Activated CD4-positive, alpha-beta T cell treated with anti-CD3 and anti-CD28 coated beads for 36 hours (primary cell): ENCODE measurements at regions of chr7 and their contacts with region 1.

Region 1: GRCh38 chr7:116862234-116862950 is at the start of gene CAPZA2:
- DNase-seq: peak; percentile 97
- ATAC-seq: peak; percentile 95
- H3K4me3 Mint-ChIP-seq: peak within 1 kb of the TSS; percentile 95
- H3K27ac Mint-ChIP-seq: peak within 1 kb of the TSS; percentile 96
- H3K4me1 Mint-ChIP-seq: peaks cover 40% of the 10 kb centered on the region
- H3K27me3 Mint-ChIP-seq: peaks cover 4% of the 10 kb centered on the region
- total RNA-seq, gene CAPZA2: 173 to 262 TPM

Region 2: DNA sequence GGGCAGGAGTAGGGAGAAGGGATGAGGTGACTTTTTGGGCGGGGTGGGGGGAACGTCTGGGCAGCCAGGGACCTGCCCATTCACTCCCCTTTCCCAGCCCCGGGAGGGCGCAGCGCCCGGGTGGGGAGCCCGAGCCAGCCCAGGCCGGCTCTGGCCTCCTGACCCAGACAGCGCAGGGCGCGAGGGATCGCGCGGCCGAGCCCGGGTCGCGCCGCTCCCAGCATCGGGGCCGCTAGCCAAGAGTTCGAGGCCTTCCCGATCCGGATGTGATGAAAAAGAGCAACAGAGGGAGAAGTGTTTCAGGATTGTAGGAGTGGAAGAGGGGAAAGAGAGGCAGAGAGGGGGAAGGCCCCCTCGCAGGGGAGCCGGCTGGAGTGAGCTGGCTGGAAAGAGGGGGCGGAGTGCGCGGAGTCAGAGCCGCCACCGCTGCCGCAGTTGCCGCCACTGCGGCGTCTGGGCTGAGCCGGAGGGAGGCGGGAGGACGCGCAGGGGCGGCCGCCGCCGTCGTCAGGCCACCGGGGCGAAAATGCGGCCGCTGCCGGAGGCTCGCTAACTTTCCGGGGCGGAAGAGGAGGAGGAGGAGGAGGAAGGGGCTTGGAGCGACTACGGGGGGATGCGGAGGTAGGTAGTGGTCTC is 1940.3 kb before region 1 on chr7 and contains the start of gene MDFIC:
- CTCF ChIA-PET with region 1: no interaction called
- POLR2A ChIA-PET with region 1: no interaction called
- intact Hi-C with region 1: loop called in 1 of 2 experiments (anchors 10 kb)
- DNase-seq: peak; percentile 83
- ATAC-seq: peak; percentile 62
- H3K4me3 Mint-ChIP-seq: peak within 1 kb of the TSS; percentile 89
- H3K27ac Mint-ChIP-seq: peak within 1 kb of the TSS; percentile 96
- H3K4me1 Mint-ChIP-seq: peaks cover 63% of the 10 kb centered on the region
- H3K27me3 Mint-ChIP-seq: no peaks in the 10 kb centered on the region
- total RNA-seq, gene MDFIC: 68.4 to 113 TPM

Region 3: GRCh38 chr7:116802746-116803152 is 59.6 kb before region 1 on chr7:
- CTCF ChIA-PET with region 1: no interaction called
- POLR2A ChIA-PET with region 1: no interaction called
- intact Hi-C with region 1: no loop called
- DNase-seq: peak; percentile 59
- ATAC-seq: peak; percentile 92
- H3K4me3 Mint-ChIP-seq: no peak overlapping the region
- H3K27ac Mint-ChIP-seq: no peak overlapping the region
- H3K4me1 Mint-ChIP-seq: peaks cover 16% of the 10 kb centered on the region
- H3K27me3 Mint-ChIP-seq: peaks cover 5% of the 10 kb centered on the region

Region 4: GRCh38 chr7:116911801-116912200 is 49.4 kb after region 1 on chr7:
- CTCF ChIA-PET with region 1: interaction called, 3 read pairs
- POLR2A ChIA-PET with region 1: no interaction called
- intact Hi-C with region 1: loop called in 1 of 2 experiments (anchors 10 kb)
- DNase-seq: no peak
- ATAC-seq: no peak
- H3K4me3 Mint-ChIP-seq: no peak overlapping the region
- H3K27ac Mint-ChIP-seq: peak overlapping the region; percentile 39
- H3K4me1 Mint-ChIP-seq: no peaks in the 10 kb centered on the region
- H3K27me3 Mint-ChIP-seq: no peaks in the 10 kb centered on the region

Region 5: GRCh38 chr7:117008883-117009531 is 146.6 kb after region 1 on chr7:
- CTCF ChIA-PET with region 1: no interaction called
- POLR2A ChIA-PET with region 1: interaction called, 11 read pairs
- intact Hi-C with region 1: loop called in 1 of 2 experiments (anchors 1 kb)
- DNase-seq: peak; percentile 45
- ATAC-seq: peak; percentile 14
- H3K4me3 Mint-ChIP-seq: no peak overlapping the region
- H3K27ac Mint-ChIP-seq: no peak overlapping the region
- H3K4me1 Mint-ChIP-seq: peaks cover 67% of the 10 kb centered on the region
- H3K27me3 Mint-ChIP-seq: peaks cover 1% of the 10 kb centered on the region

Region 6: DNA sequence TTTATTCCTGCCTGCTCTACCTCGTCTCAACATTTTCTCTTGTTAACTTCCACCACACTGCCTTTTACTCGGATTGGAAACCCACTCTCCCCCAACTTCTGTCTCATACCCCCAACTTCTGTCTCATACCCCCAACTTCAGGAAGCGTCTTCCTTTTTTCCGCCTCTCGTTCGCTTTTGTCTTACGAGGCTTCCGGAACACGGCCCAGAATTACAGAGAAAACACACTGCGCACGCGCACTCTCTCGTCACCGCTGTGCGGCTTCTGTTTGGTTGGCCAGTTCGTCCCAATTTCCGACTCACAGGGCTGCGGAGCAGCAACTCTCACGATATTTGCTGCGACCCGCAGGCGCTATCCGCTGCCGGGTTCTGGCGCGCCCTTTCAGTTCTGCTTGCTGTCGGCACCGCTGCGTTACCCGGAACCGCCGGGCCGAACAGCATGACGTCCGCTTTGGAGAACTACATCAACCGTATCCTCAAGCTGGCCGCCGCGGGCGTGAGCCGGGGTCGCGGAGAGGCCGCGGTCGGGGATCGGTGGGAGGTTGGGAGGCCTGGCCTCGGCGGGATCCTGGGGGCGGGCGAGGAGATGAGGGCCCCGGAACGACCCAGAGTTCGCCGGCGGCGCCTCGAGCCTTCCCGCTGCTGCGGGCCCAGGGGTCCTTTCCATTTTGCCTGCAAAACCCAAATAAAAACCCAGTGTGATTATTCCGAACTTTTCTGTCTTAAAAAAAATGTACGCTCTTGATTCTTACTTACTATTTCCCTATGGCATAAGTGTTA is 1321.6 kb after region 1 on chr7 and contains the start of gene LSM8:
- CTCF ChIA-PET with region 1: no interaction called
- POLR2A ChIA-PET with region 1: no interaction called
- intact Hi-C with region 1: loop called in 1 of 2 experiments (anchors 5 kb)
- DNase-seq: peak; percentile 98
- ATAC-seq: peak; percentile 99
- H3K4me3 Mint-ChIP-seq: peak within 1 kb of the TSS; percentile 99
- H3K27ac Mint-ChIP-seq: peak within 1 kb of the TSS; percentile 100
- H3K4me1 Mint-ChIP-seq: peaks cover 34% of the 10 kb centered on the region
- H3K27me3 Mint-ChIP-seq: no peaks in the 10 kb centered on the region
- total RNA-seq, gene LSM8: 35.0 to 49.9 TPM